ENCODE measurements at regions of chr19 and their contacts with region 1.

Region 1: DNA sequence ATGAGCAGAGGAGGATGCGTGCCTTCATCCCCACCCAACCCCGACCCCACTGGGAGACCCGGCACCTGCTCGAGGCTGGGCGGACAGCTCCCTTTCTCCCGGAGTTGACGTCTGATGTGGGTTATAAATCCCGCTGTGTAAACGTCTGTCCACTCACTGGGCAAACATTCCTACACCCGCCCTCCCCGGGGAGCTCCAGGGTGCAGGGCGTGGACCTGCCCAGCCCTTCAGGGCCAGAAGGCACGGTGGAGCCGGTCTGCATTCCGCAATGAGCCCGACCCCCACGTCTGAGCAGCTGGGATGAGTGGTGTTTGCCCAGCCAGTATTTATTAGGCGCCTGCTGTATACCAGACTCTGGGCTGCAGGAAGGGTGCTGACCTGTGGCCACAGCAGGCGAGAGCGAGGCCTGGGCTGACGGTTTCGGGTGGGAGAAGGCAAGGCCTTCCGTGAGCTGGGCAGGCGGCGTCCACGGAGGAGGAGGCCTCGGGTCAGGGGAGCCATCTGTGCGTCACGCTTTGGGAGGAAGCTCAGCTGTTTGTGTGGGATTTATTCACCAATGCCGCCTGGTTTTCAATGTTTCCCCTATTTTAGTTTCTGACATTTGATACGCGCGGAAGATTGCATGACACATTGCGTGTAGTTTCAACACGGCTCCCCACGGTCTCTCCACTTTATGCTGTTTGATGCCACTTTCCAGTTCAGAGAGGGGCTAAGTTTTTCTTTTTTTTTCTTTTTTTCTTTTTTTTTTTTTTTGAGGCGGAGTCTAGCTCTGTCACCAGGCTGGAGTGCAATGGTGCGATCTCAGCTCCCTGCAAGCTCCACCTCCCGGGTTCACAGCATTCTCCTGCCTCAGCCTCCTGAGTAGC is 2.0 kb downstream of the MISP start:
- DNase-seq: peak; percentile 96 to 99
- H3K4me3 ChIP-seq: peak overlapping the region; percentile 14; the same call in 1 of the 2 replicates
- H3K4me3 Mint-ChIP-seq: peak overlapping the region; percentile 77
- H3K27ac Mint-ChIP-seq: peak overlapping the region; percentile 97
- H3K4me1 ChIP-seq: peaks cover 28% of the 10 kb centered on the region
- H3K4me1 Mint-ChIP-seq: no peaks in the 10 kb centered on the region
- H3K27me3 ChIP-seq: no peaks in the 10 kb centered on the region
- H3K27me3 Mint-ChIP-seq: no peaks in the 10 kb centered on the region
- CTCF ChIP-seq: no peak

Region 2: GRCh38 chr19:662962-663681 is 89.8 kb before region 1 on chr19 and contains the start of gene RNF126:
- CTCF ChIA-PET with region 1: no interaction called
- POLR2A ChIA-PET with region 1: interaction called, 11 read pairs
- intact Hi-C with region 1: loop called (anchors 5 kb)
- DNase-seq: peak; percentile 90 to 91
- H3K4me3 ChIP-seq: peak within 1 kb of the TSS; percentile 96
- H3K4me3 Mint-ChIP-seq: peak within 1 kb of the TSS; percentile 80
- H3K27ac Mint-ChIP-seq: peak within 1 kb of the TSS; percentile 76
- H3K4me1 ChIP-seq: peaks cover 27% of the 10 kb centered on the region
- H3K4me1 Mint-ChIP-seq: no peaks in the 10 kb centered on the region
- H3K27me3 ChIP-seq: no peaks in the 10 kb centered on the region
- H3K27me3 Mint-ChIP-seq: no peaks in the 10 kb centered on the region
- CTCF ChIP-seq: no peak
- total RNA-seq, gene RNF126: 74.6 and 77.9 TPM in 2 replicates

Region 3: DNA sequence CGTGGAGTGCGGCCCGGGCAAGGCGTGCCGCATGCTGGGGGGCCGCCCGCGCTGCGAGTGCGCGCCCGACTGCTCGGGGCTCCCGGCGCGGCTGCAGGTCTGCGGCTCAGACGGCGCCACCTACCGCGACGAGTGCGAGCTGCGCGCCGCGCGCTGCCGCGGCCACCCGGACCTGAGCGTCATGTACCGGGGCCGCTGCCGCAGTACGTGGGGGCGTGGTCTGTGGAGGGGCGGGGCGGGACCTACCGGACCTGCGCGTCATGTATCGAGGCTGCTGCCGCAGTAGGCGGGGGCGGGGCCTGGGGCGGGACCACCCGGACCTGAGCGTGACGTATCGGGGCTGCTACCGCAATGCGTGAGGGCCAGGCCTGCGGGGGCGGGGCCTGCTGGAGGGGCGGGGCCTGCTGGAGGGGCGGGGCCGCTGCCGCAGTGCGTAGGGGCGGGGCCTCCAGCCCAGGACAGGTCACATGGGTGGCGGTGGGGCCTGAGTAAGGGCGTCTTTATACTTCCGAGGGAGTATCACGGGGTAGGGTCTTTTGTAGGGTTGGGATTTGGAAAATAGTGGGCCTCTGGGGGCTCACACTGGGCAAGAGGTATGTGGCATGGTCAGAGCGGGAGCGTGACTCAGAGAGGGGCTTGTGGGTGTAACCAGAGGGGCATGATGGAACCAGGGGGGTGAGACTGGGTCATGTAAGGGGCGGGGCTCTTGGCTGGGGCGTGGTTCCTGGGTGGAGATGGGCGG is 72.4 kb before region 1 on chr19:
- CTCF ChIA-PET with region 1: interaction called, 11 read pairs
- POLR2A ChIA-PET with region 1: interaction called, 7 read pairs
- intact Hi-C with region 1: loop called (anchors 1 kb)
- DNase-seq: peak; percentile 98 to 99
- H3K4me3 ChIP-seq: peak overlapping the region; percentile 61
- H3K4me3 Mint-ChIP-seq: peak overlapping the region; percentile 75
- H3K27ac Mint-ChIP-seq: peak overlapping the region; percentile 82
- H3K4me1 ChIP-seq: peaks cover 11% of the 10 kb centered on the region
- H3K4me1 Mint-ChIP-seq: peaks cover 1% of the 10 kb centered on the region
- H3K27me3 ChIP-seq: no peaks in the 10 kb centered on the region
- H3K27me3 Mint-ChIP-seq: no peaks in the 10 kb centered on the region
- CTCF ChIP-seq: peak; percentile 23 to 45

Region 4: GRCh38 chr19:722553-723101 is 30.3 kb before region 1 on chr19:
- CTCF ChIA-PET with region 1: no interaction called
- POLR2A ChIA-PET with region 1: no interaction called
- intact Hi-C with region 1: no loop called
- DNase-seq: no peak
- H3K4me3 ChIP-seq: no peak overlapping the region
- H3K4me3 Mint-ChIP-seq: no peak overlapping the region
- H3K27ac Mint-ChIP-seq: no peak overlapping the region
- H3K4me1 ChIP-seq: no peaks in the 10 kb centered on the region
- H3K4me1 Mint-ChIP-seq: no peaks in the 10 kb centered on the region
- H3K27me3 ChIP-seq: no peaks in the 10 kb centered on the region
- H3K27me3 Mint-ChIP-seq: no peaks in the 10 kb centered on the region
- CTCF ChIP-seq: no peak

Region 5: GRCh38 chr19:737581-738093 is 15.2 kb before region 1 on chr19:
- CTCF ChIA-PET with region 1: interaction called, 3 read pairs
- POLR2A ChIA-PET with region 1: interaction called, 8 read pairs
- intact Hi-C with region 1: loop called (anchors 2 kb)
- DNase-seq: peak; percentile 59 to 63
- H3K4me3 ChIP-seq: no peak overlapping the region
- H3K4me3 Mint-ChIP-seq: no peak overlapping the region
- H3K27ac Mint-ChIP-seq: peak overlapping the region; percentile 66
- H3K4me1 ChIP-seq: peaks cover 16% of the 10 kb centered on the region
- H3K4me1 Mint-ChIP-seq: peaks cover 7% of the 10 kb centered on the region
- H3K27me3 ChIP-seq: no peaks in the 10 kb centered on the region
- H3K27me3 Mint-ChIP-seq: no peaks in the 10 kb centered on the region
- CTCF ChIP-seq: peak; percentile 39 to 42

Region 6: GRCh38 chr19:888581-889385 is 135.9 kb after region 1 on chr19:
- CTCF ChIA-PET with region 1: no interaction called
- POLR2A ChIA-PET with region 1: interaction called, 12 read pairs
- intact Hi-C with region 1: no loop called
- DNase-seq: no peak
- H3K4me3 ChIP-seq: no peak overlapping the region
- H3K4me3 Mint-ChIP-seq: no peak overlapping the region
- H3K27ac Mint-ChIP-seq: no peak overlapping the region
- H3K4me1 ChIP-seq: peaks cover 11% of the 10 kb centered on the region
- H3K4me1 Mint-ChIP-seq: no peaks in the 10 kb centered on the region
- H3K27me3 ChIP-seq: no peaks in the 10 kb centered on the region
- H3K27me3 Mint-ChIP-seq: no peaks in the 10 kb centered on the region
- CTCF ChIP-seq: no peak

Measured in Caco-2 (cell line).